ENCODE measurements at regions of chr10 and their contacts with region 1.

Region 1: GRCh38 chr10:1308163-1308961 is 252.2 kb downstream of the WDR37 start:
- DNase-seq: no peak
- H3K4me3 ChIP-seq: no peak overlapping the region
- H3K27ac ChIP-seq: no peak overlapping the region
- H3K4me1 ChIP-seq: no peaks in the 10 kb centered on the region
- H3K27me3 ChIP-seq: peaks cover 30% of the 10 kb centered on the region
- CTCF ChIP-seq: no peak

Region 2: DNA sequence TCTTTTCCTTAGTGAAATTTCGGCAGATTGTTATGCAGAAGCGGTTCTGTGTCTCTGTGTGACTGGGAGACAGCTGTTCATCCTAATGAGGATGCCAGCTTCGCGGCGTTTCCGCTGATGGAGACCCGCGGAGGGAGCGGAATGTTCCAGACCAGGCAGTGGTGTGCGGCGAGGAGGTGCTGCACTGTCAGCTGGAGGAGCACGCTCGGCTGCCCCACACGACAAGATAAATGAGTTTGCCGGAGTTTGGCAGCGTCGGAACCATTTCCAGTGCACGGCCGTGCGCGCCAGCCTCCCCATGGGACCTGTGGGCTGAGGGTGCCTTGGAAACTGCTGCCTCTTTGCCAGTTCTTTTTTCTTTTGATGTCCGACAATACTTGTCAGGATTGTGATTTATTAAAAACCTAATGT is 187.6 kb before region 1 on chr10:
- CTCF ChIA-PET with region 1: no interaction called
- POLR2A ChIA-PET with region 1: no interaction called
- intact Hi-C with region 1: no loop called
- DNase-seq: no peak
- H3K4me3 ChIP-seq: no peak overlapping the region
- H3K27ac ChIP-seq: no peak overlapping the region
- H3K4me1 ChIP-seq: no peaks in the 10 kb centered on the region
- H3K27me3 ChIP-seq: no peaks in the 10 kb centered on the region
- CTCF ChIP-seq: no peak

Region 3: DNA sequence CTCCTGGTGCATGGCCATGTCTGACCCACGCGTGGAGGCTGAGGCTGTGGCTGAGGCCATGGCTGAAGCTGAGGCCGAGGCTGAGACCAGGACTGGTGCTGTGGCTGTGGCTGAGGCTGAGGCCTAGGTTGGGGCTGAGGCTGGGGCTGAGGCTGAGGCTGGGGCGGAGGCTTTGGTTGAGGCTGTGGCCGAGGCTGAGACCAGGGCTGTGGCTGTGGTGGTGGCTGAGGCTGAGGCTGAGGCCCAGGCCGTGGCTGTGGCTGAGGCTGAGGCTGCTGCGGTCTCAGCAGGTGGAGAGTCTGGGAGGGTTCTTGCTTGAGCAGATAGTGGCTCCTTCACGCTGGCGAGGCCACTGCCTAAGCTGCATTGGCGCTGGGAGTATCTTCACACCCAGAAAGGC is 175.8 kb before region 1 on chr10:
- CTCF ChIA-PET with region 1: no interaction called
- POLR2A ChIA-PET with region 1: no interaction called
- intact Hi-C with region 1: no loop called
- DNase-seq: no peak
- H3K4me3 ChIP-seq: no peak overlapping the region
- H3K27ac ChIP-seq: no peak overlapping the region
- H3K4me1 ChIP-seq: no peaks in the 10 kb centered on the region
- H3K27me3 ChIP-seq: no peaks in the 10 kb centered on the region
- CTCF ChIP-seq: no peak

Region 4: GRCh38 chr10:1333981-1334380 is 25.6 kb after region 1 on chr10:
- CTCF ChIA-PET with region 1: no interaction called
- POLR2A ChIA-PET with region 1: no interaction called
- intact Hi-C with region 1: loop called (anchors 1 kb)
- DNase-seq: no peak
- H3K4me3 ChIP-seq: no peak overlapping the region
- H3K27ac ChIP-seq: no peak overlapping the region
- H3K4me1 ChIP-seq: no peaks in the 10 kb centered on the region
- H3K27me3 ChIP-seq: peaks cover 40% of the 10 kb centered on the region
- CTCF ChIP-seq: no peak

Measured in PC-9 (cell line).